Activated CD4-positive, alpha-beta T cell treated with anti-CD3 and anti-CD28 coated beads for 36 hours (primary cell): ENCODE measurements at regions of chr14 and their contacts with region 1.

Region 1: DNA sequence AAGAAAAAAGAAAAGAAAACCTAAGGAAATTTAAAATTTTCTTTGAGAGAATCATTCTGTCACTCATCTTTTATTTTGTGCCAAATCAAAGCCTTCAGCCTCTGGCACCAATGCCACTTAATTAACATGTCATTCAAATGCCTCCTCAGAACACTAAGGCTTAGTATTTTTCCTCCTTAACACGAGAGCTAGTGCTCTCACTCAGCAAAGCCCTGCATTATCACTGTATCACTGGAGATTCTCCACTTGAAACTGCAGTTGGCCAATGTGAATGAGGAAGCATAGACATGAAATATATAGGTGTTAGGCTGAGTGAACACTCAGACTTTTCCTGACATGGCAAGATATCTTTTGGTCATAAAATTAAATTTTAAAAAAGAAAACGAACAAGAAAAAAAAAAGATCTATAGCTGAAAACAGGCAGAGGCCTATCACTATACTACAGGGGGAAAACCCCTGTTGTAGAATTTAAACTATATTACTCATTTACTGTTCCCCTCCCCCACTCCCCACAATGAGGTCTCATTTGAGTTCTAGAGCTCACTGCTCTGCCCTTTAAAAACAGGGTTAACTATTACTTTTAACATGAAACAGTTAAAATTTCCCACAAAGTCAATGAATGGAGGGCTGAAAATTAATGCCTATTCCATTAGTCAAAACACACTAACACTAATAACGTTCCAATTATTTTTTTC is 5.1 kb downstream of the MBIP start:
- DNase-seq: peak; percentile 72
- ATAC-seq: peak; percentile 82
- H3K4me3 Mint-ChIP-seq: peak overlapping the region; percentile 46
- H3K27ac Mint-ChIP-seq: peak overlapping the region; percentile 86
- H3K4me1 Mint-ChIP-seq: peaks cover 42% of the 10 kb centered on the region
- H3K27me3 Mint-ChIP-seq: no peaks in the 10 kb centered on the region

Region 2: DNA sequence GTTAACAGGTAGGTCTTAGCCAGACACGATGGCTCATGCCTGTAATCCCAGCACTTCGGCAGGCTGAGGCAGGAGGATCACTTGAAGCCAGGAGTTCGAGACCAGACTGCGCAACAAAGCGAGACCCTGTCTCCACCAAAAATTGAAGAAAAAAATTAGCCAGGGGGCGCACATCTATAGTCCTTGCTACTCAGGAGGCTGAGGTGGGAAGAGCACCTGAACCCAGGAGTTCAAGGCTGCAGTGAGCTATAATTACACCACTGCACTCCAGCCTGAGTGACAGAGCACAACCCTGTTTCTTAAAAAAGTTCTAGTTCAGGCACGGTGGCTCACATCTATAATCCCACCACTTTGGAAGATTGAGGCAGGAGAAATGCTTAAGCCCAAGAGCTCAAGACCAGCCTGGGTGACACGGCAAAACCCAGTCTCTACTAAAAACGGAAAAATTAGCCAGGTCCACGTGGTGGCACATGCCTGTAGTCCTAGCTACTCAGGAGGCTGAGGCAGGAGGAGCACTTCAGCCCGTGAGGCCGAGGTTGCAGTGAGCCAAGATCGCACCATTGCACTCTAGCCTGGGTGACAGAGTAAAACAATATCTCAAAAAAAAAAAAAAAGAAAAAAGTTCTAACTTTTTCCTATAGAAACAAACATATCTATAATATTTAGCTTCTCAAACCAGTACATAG is 1449.3 kb before region 1 on chr14:
- CTCF ChIA-PET with region 1: no interaction called
- POLR2A ChIA-PET with region 1: no interaction called
- intact Hi-C with region 1: loop called in 1 of 2 experiments (anchors 5 kb)
- DNase-seq: no peak
- ATAC-seq: no peak
- H3K4me3 Mint-ChIP-seq: no peak overlapping the region
- H3K27ac Mint-ChIP-seq: no peak overlapping the region
- H3K4me1 Mint-ChIP-seq: peaks cover 41% of the 10 kb centered on the region
- H3K27me3 Mint-ChIP-seq: no peaks in the 10 kb centered on the region

Region 3: DNA sequence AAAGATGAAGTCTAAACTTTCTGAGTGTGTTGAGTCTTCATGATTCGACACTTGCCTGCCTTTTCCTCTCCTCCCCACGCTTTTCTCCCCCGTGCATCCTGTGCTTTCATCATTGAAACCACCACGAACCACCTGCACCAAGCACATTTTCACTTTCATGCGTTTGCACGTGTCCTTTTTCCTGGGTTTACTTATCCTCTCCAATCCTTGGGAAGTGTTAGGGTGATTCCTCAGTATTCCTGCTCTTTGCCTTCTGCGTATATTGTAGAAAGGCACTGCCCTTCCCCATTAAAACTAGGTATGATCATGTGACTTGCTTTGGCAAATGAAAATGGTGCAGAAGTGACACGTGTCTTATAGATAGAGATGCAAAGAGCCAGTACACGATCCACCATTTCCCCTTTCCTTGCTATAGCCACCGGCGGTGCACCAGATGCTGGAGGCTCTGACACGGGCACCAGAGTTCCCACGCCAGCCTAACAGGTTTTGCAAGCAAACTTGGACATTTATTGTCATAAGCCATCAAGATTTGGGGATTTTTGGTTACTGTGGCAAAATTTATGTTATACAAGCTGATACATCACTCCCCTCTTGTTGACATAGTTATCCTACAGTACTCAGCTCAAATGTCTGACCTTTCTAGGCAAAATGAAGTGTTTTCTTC is 382.5 kb before region 1 on chr14:
- CTCF ChIA-PET with region 1: no interaction called
- POLR2A ChIA-PET with region 1: no interaction called
- intact Hi-C with region 1: loop called in 1 of 2 experiments (anchors 5 kb)
- DNase-seq: peak; percentile 70
- ATAC-seq: peak; percentile 89
- H3K4me3 Mint-ChIP-seq: peak overlapping the region; percentile 58
- H3K27ac Mint-ChIP-seq: peak overlapping the region; percentile 75
- H3K4me1 Mint-ChIP-seq: peaks cover 36% of the 10 kb centered on the region
- H3K27me3 Mint-ChIP-seq: peaks cover 2% of the 10 kb centered on the region

Region 4: GRCh38 chr14:36271939-36272907 is 43.1 kb before region 1 on chr14:
- CTCF ChIA-PET with region 1: no interaction called
- POLR2A ChIA-PET with region 1: no interaction called
- intact Hi-C with region 1: loop called in 1 of 2 experiments (anchors 5 kb)
- DNase-seq: peak; percentile 66
- ATAC-seq: peak; percentile 96
- H3K4me3 Mint-ChIP-seq: peak overlapping the region; percentile 61
- H3K27ac Mint-ChIP-seq: peak overlapping the region; percentile 23
- H3K4me1 Mint-ChIP-seq: peaks cover 9% of the 10 kb centered on the region
- H3K27me3 Mint-ChIP-seq: peaks cover 60% of the 10 kb centered on the region

Region 5: GRCh38 chr14:36383674-36384431 is 68.5 kb after region 1 on chr14:
- CTCF ChIA-PET with region 1: no interaction called
- POLR2A ChIA-PET with region 1: no interaction called
- intact Hi-C with region 1: no loop called
- DNase-seq: no peak
- ATAC-seq: no peak
- H3K4me3 Mint-ChIP-seq: no peak overlapping the region
- H3K27ac Mint-ChIP-seq: no peak overlapping the region
- H3K4me1 Mint-ChIP-seq: no peaks in the 10 kb centered on the region
- H3K27me3 Mint-ChIP-seq: peaks cover 6% of the 10 kb centered on the region